CD4-positive, alpha-beta memory T cell (primary cell): ENCODE measurements at regions of chr11 and their contacts with region 1.

Region 1: DNA sequence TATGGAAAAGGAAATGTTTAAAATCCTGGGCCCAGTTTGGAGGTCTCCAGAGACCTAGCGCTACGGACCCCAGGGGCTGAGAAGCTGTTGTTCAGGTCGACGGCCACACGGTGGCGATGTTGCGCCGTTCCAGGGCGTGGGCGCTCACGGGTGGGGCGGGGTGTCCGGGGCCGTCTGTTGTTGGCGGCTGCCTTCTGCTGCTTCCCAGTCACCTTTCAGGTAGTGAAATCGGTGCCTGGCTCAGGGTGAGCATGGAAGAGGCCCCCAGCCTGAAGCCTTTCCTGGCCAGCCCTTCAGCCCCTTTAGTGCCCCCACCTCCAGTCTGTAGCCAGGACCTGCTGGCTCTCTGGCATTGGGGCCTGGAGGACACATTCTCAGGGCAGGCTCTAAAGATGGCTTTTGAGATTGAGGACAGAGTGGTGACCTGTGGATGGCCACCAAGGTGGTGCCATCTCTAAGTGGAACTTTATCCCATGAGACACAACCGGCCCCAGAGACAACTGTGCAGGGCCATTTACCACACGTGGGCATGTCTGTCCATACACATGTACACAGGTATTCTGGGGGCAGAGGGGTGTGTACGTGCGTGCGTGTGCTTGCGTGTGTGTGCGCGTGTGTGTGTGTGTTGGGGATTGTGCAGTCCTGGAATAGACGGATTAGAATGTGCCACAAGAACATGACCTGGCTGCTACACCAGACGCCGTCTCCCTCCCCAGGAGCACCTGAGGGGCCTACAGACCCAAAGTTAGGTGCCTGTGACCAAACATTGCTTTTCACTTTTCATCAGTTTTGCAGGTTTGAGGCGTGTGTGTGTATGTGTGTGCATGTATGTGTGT is 53.8 kb downstream of the ST14 start:
- DNase-seq: peak; percentile 47 to 69 (median 63)
- H3K4me3 ChIP-seq: no peak overlapping the region
- H3K4me3 Mint-ChIP-seq: no peak overlapping the region
- H3K27ac ChIP-seq: no peak overlapping the region
- H3K27ac Mint-ChIP-seq: no peak overlapping the region
- H3K4me1 ChIP-seq: peaks cover 7% of the 10 kb centered on the region
- H3K4me1 Mint-ChIP-seq: no peaks in the 10 kb centered on the region
- H3K27me3 ChIP-seq: no peaks in the 10 kb centered on the region
- H3K27me3 Mint-ChIP-seq: peaks cover 4 to 9% of the 10 kb centered on the region in 2 donors

Region 2: GRCh38 chr11:130227373-130227772 is 14.0 kb after region 1 on chr11:
- CTCF ChIA-PET with region 1: interaction called, 15 read pairs
- POLR2A ChIA-PET with region 1: no interaction called
- intact Hi-C with region 1: no loop called
- DNase-seq: no peak
- H3K4me3 ChIP-seq: no peak overlapping the region
- H3K4me3 Mint-ChIP-seq: no peak overlapping the region
- H3K27ac ChIP-seq: no peak overlapping the region
- H3K27ac Mint-ChIP-seq: no peak overlapping the region
- H3K4me1 ChIP-seq: no peaks in the 10 kb centered on the region
- H3K4me1 Mint-ChIP-seq: peaks cover 3 to 11% (median 5%) of the 10 kb centered on the region in 4 donors
- H3K27me3 ChIP-seq: no peaks in the 10 kb centered on the region
- H3K27me3 Mint-ChIP-seq: no peaks in the 10 kb centered on the region

Region 3: DNA sequence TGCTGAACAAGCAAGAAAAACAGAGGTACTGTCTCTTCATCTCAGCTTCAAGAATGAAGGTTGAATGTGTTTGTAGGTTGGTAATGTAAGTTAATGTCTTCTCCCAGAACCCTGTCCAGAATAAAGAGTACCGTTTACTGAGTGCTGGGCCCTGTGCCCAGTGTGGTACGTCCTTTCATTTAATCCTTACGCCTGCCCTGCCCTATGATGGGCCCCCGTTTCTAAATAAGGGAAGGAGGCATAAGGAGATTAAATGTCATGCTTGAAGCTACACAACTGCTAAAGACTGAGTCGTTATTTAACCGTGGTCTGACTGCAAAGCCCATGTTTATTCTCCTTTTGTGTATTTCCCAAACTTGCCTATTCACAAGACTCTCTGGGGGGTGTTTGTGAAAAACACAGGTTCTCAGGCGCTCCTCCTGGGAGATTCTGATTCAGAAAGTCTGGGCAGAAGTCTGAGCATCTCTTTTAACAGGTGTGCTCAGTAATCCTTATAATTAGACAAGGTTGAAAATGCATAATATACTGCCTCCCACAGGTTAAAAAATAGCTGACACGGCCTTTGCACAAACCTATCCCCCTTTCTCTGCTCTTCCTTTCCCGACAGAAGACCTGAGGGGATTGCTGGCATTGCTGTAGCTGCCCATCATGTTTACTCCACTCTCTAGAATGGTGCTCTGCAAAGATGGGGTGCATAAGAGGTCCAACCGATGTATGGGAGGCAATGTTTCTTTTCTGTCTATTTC is 157.7 kb after region 1 on chr11:
- CTCF ChIA-PET with region 1: interaction called, 34 read pairs
- POLR2A ChIA-PET with region 1: no interaction called
- intact Hi-C with region 1: loop called (anchors 1 kb)
- DNase-seq: peak in 2 of 5 donors; percentile 2 to 4
- H3K4me3 ChIP-seq: no peak overlapping the region
- H3K4me3 Mint-ChIP-seq: no peak overlapping the region
- H3K27ac ChIP-seq: no peak overlapping the region
- H3K27ac Mint-ChIP-seq: no peak overlapping the region
- H3K4me1 ChIP-seq: no peaks in the 10 kb centered on the region
- H3K4me1 Mint-ChIP-seq: no peaks in the 10 kb centered on the region
- H3K27me3 ChIP-seq: no peaks in the 10 kb centered on the region
- H3K27me3 Mint-ChIP-seq: peaks cover 1 to 2% of the 10 kb centered on the region in 2 donors

Region 4: GRCh38 chr11:130390071-130390758 is 176.9 kb after region 1 on chr11:
- CTCF ChIA-PET with region 1: interaction called, 10 read pairs
- POLR2A ChIA-PET with region 1: no interaction called
- intact Hi-C with region 1: no loop called
- DNase-seq: no peak
- H3K4me3 ChIP-seq: no peak overlapping the region
- H3K4me3 Mint-ChIP-seq: peak overlapping the region in 1 of 8 donors; percentile 10
- H3K27ac ChIP-seq: no peak overlapping the region
- H3K27ac Mint-ChIP-seq: peak overlapping the region in 3 of 7 donors; percentile 31 to 50 (median 46)
- H3K4me1 ChIP-seq: peaks cover 17% of the 10 kb centered on the region
- H3K4me1 Mint-ChIP-seq: peaks cover 14 to 31% (median 25%) of the 10 kb centered on the region in 4 donors
- H3K27me3 ChIP-seq: no peaks in the 10 kb centered on the region
- H3K27me3 Mint-ChIP-seq: no peaks in the 10 kb centered on the region

Region 5: GRCh38 chr11:130434521-130435223 is 221.3 kb after region 1 on chr11:
- CTCF ChIA-PET with region 1: interaction called, 18 read pairs
- POLR2A ChIA-PET with region 1: no interaction called
- intact Hi-C with region 1: loop called (anchors 1 kb)
- DNase-seq: peak; percentile 60 to 68 (median 63)
- H3K4me3 ChIP-seq: peak overlapping the region; percentile 67 to 85
- H3K4me3 Mint-ChIP-seq: no peak overlapping the region
- H3K27ac ChIP-seq: no peak overlapping the region
- H3K27ac Mint-ChIP-seq: no peak overlapping the region
- H3K4me1 ChIP-seq: peaks cover 10% of the 10 kb centered on the region
- H3K4me1 Mint-ChIP-seq: peaks cover 7 to 17% (median 15%) of the 10 kb centered on the region in 4 donors
- H3K27me3 ChIP-seq: peaks cover 5% of the 10 kb centered on the region
- H3K27me3 Mint-ChIP-seq: peaks cover 9% of the 10 kb centered on the region in 2 donors

Region 6: GRCh38 chr11:130894322-130895025 is 681.1 kb after region 1 on chr11:
- CTCF ChIA-PET with region 1: no interaction called
- POLR2A ChIA-PET with region 1: no interaction called
- intact Hi-C with region 1: loop called (anchors 1 kb)
- DNase-seq: peak; percentile 43 to 60 (median 50)
- H3K4me3 ChIP-seq: no peak overlapping the region
- H3K4me3 Mint-ChIP-seq: no peak overlapping the region
- H3K27ac ChIP-seq: no peak overlapping the region
- H3K27ac Mint-ChIP-seq: peak overlapping the region in 2 of 7 donors; percentile 18 to 45
- H3K4me1 ChIP-seq: no peaks in the 10 kb centered on the region
- H3K4me1 Mint-ChIP-seq: peaks cover 8 to 11% (median 9%) of the 10 kb centered on the region in 4 donors
- H3K27me3 ChIP-seq: no peaks in the 10 kb centered on the region
- H3K27me3 Mint-ChIP-seq: no peaks in the 10 kb centered on the region